ENCODE measurements at regions of chr19 and their contacts with region 1.

Region 1: DNA sequence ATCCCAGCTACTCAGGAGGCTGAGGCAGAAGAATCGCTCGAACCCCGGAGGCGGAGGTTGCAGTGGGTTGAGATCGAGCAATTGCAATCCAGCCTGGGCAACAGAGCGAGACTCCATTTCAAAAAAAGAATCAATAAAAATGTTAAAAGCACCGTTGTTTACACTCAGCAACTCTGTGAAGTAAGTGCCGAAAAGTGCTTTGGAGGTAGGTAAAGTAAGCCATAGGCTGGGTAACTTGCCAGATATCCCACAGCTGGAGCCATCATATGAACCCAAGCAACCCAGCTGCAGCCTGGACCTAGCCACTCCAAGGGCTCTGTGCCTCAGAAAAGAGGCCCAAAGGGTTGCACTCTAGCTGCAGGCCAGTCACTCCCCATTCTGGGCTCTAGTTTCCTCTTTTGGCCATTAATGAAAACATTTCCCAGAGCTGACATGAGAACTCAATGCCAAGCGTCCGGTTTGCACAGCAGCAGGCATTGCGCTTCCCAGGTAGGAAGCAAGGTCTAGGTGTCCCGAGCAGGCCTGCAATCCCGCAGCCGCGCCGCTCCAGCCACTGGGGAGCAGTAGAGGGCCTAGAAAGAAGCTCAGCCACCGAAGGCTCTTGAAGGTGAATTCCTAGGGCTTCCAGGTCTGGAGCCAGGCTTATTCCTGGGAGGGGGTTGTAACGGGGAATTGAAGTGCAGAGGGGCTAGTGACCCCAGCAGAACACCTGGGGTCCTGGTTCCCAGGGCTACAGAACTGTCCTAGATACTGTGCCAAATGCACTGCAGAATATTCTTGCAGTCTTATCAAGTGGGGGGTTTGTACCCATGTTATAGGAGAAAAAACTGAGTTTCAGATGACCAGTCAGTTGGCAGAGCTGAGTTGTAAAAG is 4.1 kb upstream of the CD79A start:
- DNase-seq: peak; percentile 80
- H3K4me3 Mint-ChIP-seq: no peak overlapping the region
- H3K27ac Mint-ChIP-seq: peak overlapping the region; percentile 96
- H3K4me1 Mint-ChIP-seq: peaks cover 84% of the 10 kb centered on the region
- H3K27me3 Mint-ChIP-seq: no peaks in the 10 kb centered on the region

Region 2: GRCh38 chr19:41859618-41860418 is 13.2 kb before region 1 on chr19 and contains the start of gene RPS19:
- CTCF ChIA-PET with region 1: interaction called, 51 read pairs
- POLR2A ChIA-PET with region 1: interaction called, 68 read pairs
- intact Hi-C with region 1: loop called (anchors 1 kb)
- DNase-seq: peak; percentile 99
- H3K4me3 Mint-ChIP-seq: peak within 1 kb of the TSS; percentile 87
- H3K27ac Mint-ChIP-seq: peak within 1 kb of the TSS; percentile 94
- H3K4me1 Mint-ChIP-seq: peaks cover 43% of the 10 kb centered on the region
- H3K27me3 Mint-ChIP-seq: no peaks in the 10 kb centered on the region
- total RNA-seq, gene RPS19: 3,181 to 3,314 TPM

Region 3: GRCh38 chr19:41928221-41928683 is 55.2 kb after region 1 on chr19 and contains the start of gene ERFL:
- CTCF ChIA-PET with region 1: interaction called, 3 read pairs
- POLR2A ChIA-PET with region 1: interaction called, 3 read pairs
- intact Hi-C with region 1: loop called (anchors 2 kb)
- DNase-seq: no peak
- H3K4me3 Mint-ChIP-seq: peak within 1 kb of the TSS; percentile 80
- H3K27ac Mint-ChIP-seq: peak within 1 kb of the TSS; percentile 43
- H3K4me1 Mint-ChIP-seq: peaks cover 15% of the 10 kb centered on the region
- H3K27me3 Mint-ChIP-seq: no peaks in the 10 kb centered on the region
- total RNA-seq, gene ERFL: 1.3 to 2.0 TPM

Region 4: GRCh38 chr19:41945135-41945766 is 72.2 kb after region 1 on chr19:
- CTCF ChIA-PET with region 1: interaction called, 46 read pairs
- POLR2A ChIA-PET with region 1: interaction called, 28 read pairs
- intact Hi-C with region 1: loop called (anchors 2 kb)
- DNase-seq: peak; percentile 95
- H3K4me3 Mint-ChIP-seq: peak overlapping the region; percentile 53
- H3K27ac Mint-ChIP-seq: peak overlapping the region; percentile 98
- H3K4me1 Mint-ChIP-seq: peaks cover 42% of the 10 kb centered on the region
- H3K27me3 Mint-ChIP-seq: peaks cover 2% of the 10 kb centered on the region

Region 5: DNA sequence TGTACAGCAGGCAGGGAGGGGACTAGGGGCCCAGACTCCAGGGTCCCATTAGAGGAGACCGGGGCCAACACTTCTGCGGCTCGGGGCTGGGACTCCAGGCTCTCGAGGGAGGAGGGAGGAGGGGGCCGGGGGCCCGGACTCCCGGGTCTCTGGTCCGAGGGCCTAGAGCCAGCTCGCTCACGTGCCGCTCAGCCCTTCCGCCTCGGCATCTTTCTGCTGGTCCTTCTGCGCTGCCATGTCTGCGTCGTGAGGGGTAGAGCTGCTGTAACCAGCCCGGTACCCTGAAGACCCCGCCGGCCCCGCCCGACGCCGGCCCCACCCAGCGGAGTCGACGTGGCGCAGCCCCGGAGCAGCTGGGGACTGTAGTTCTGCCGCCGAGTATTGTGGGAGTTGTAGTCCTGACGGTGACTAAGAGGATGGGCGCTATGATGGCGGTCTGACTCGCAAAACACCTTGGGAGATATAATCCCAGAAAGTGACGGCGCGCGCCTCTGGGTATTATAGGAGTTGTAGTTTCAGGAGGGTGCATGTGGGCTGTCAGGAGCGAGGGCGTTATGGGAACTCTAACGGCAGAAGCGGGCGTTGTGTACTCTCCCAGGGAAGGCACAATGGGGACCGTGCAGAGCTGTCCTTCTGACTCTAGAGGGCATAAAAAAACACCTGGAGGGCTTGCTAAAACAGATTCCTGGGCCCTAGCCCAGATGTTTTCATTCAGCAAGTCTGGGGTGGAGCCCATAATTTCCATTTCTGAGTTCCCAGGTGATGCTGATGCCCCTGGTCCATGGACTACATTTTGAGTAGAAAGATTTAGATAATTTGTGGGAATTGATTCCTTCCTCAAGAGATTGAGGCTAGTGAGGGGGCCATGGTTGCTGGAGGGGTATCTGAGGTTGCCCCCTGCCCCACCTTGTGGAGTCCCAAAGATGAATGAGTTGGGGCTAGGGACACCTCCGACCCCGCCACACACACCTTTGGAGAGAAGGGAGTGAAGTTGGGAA is 86.3 kb after region 1 on chr19 and contains the start of gene RABAC1:
- CTCF ChIA-PET with region 1: interaction called, 31 read pairs
- POLR2A ChIA-PET with region 1: interaction called, 7 read pairs
- intact Hi-C with region 1: no loop called
- DNase-seq: peak; percentile 92
- H3K4me3 Mint-ChIP-seq: peak within 1 kb of the TSS; percentile 86
- H3K27ac Mint-ChIP-seq: peak within 1 kb of the TSS; percentile 82
- H3K4me1 Mint-ChIP-seq: peaks cover 14% of the 10 kb centered on the region
- H3K27me3 Mint-ChIP-seq: no peaks in the 10 kb centered on the region
- total RNA-seq, gene RABAC1: 64.9 to 68.4 TPM